ENCODE measurements at regions of chr20 and their contacts with region 1.

Region 1: GRCh38 chr20:35954200-35954906 is at the start of gene SCAND1:
- DNase-seq: peak; percentile 94 to 99 (median 96)
- ATAC-seq: peak; percentile 82
- H3K4me3 ChIP-seq: peak within 1 kb of the TSS; percentile 96
- H3K4me3 Mint-ChIP-seq: peak within 1 kb of the TSS; percentile 99
- H3K27ac ChIP-seq: peak within 1 kb of the TSS; percentile 99
- H3K27ac Mint-ChIP-seq: peak within 1 kb of the TSS; percentile 98
- H3K4me1 ChIP-seq: peaks cover 31% of the 10 kb centered on the region
- H3K4me1 Mint-ChIP-seq: peaks cover 30% of the 10 kb centered on the region
- H3K27me3 ChIP-seq: no peaks in the 10 kb centered on the region
- H3K27me3 Mint-ChIP-seq: no peaks in the 10 kb centered on the region
- CTCF ChIP-seq: peak; percentile 100
- total RNA-seq, gene SCAND1: 77.2 to 82.7 TPM

Region 2: DNA sequence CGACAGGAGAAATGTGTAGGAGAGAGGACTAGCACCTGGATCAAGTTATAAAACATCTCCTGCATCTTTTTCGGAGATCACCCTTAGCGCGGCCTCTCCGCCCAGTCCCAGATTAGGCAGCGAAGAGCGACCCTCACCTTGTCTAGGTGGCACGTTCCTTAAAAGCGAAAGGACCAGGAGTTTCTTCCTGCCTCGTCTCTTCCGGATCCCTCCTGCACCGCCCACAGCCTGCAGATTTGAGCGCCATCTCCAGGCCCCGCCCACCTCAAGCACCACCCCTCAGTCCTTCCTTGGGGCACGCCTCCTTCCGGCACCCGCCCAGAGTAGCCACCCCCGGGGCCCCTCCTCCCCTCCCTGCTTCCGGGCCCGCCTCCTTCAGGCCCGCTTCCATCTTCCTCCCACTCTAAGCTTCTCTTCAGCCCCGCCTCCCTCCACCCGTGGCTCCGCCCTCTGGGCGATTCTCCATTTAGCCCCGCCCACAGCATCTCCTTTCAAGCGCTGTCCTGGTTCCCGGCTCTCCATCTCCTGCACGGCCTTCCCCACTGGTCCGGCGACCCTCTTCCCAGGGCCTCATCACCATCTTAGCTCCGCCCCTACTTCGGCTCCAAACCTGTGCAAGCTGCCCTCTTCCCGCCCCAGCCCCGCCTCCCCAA is 1961.3 kb before region 1 on chr20:
- CTCF ChIA-PET with region 1: no interaction called
- POLR2A ChIA-PET with region 1: interaction called, 5 read pairs
- intact Hi-C with region 1: loop called in 1 of 2 experiments (anchors 10 kb)
- DNase-seq: peak; percentile 99 to 100 (median 99)
- ATAC-seq: peak; percentile 82
- H3K4me3 ChIP-seq: peak overlapping the region; percentile 97
- H3K4me3 Mint-ChIP-seq: peak overlapping the region; percentile 100
- H3K27ac ChIP-seq: peak overlapping the region; percentile 91 to 92
- H3K27ac Mint-ChIP-seq: peak overlapping the region; percentile 99
- H3K4me1 ChIP-seq: peaks cover 51% of the 10 kb centered on the region
- H3K4me1 Mint-ChIP-seq: peaks cover 68% of the 10 kb centered on the region
- H3K27me3 ChIP-seq: no peaks in the 10 kb centered on the region
- H3K27me3 Mint-ChIP-seq: no peaks in the 10 kb centered on the region
- CTCF ChIP-seq: no peak

Region 3: GRCh38 chr20:35284267-35284991 is 669.9 kb before region 1 on chr20 and contains the start of gene EIF6:
- CTCF ChIA-PET with region 1: interaction called, 3 read pairs
- POLR2A ChIA-PET with region 1: interaction called, 6 read pairs
- intact Hi-C with region 1: loop called in 1 of 2 experiments (anchors 5 kb)
- DNase-seq: peak; percentile 32 to 83 (median 64)
- ATAC-seq: peak; percentile 69
- H3K4me3 ChIP-seq: peak within 1 kb of the TSS; percentile 88
- H3K4me3 Mint-ChIP-seq: peak within 1 kb of the TSS; percentile 97
- H3K27ac ChIP-seq: peak within 1 kb of the TSS; percentile 61 to 71
- H3K27ac Mint-ChIP-seq: peak within 1 kb of the TSS; percentile 84
- H3K4me1 ChIP-seq: peaks cover 22% of the 10 kb centered on the region
- H3K4me1 Mint-ChIP-seq: peaks cover 22% of the 10 kb centered on the region
- H3K27me3 ChIP-seq: no peaks in the 10 kb centered on the region
- H3K27me3 Mint-ChIP-seq: no peaks in the 10 kb centered on the region
- CTCF ChIP-seq: no peak
- total RNA-seq, gene EIF6: 24.9 to 25.8 TPM

Region 4: GRCh38 chr20:35541783-35542588 is 412.4 kb before region 1 on chr20 and contains the start of gene ERGIC3:
- CTCF ChIA-PET with region 1: no interaction called
- POLR2A ChIA-PET with region 1: interaction called, 10 read pairs
- intact Hi-C with region 1: no loop called
- DNase-seq: peak; percentile 95 to 99 (median 96)
- ATAC-seq: peak; percentile 99
- H3K4me3 ChIP-seq: peak within 1 kb of the TSS; percentile 75
- H3K4me3 Mint-ChIP-seq: peak within 1 kb of the TSS; percentile 97
- H3K27ac ChIP-seq: peak within 1 kb of the TSS; percentile 65 to 81
- H3K27ac Mint-ChIP-seq: peak within 1 kb of the TSS; percentile 89
- H3K4me1 ChIP-seq: peaks cover 18% of the 10 kb centered on the region
- H3K4me1 Mint-ChIP-seq: peaks cover 32% of the 10 kb centered on the region
- H3K27me3 ChIP-seq: no peaks in the 10 kb centered on the region
- H3K27me3 Mint-ChIP-seq: no peaks in the 10 kb centered on the region
- CTCF ChIP-seq: no peak
- total RNA-seq, gene ERGIC3: 144 to 146 TPM

Region 5: GRCh38 chr20:35741892-35742740 is 212.2 kb before region 1 on chr20 and contains the start of gene RBM39:
- CTCF ChIA-PET with region 1: interaction called, 21 read pairs
- POLR2A ChIA-PET with region 1: interaction called, 126 read pairs
- intact Hi-C with region 1: loop called in 1 of 2 experiments (anchors 2 kb)
- DNase-seq: peak; percentile 96 to 100 (median 99)
- ATAC-seq: peak; percentile 80
- H3K4me3 ChIP-seq: peak within 1 kb of the TSS; percentile 84
- H3K4me3 Mint-ChIP-seq: peak within 1 kb of the TSS; percentile 99
- H3K27ac ChIP-seq: peak within 1 kb of the TSS; percentile 99 to 100
- H3K27ac Mint-ChIP-seq: peak within 1 kb of the TSS; percentile 99
- H3K4me1 ChIP-seq: peaks cover 44% of the 10 kb centered on the region
- H3K4me1 Mint-ChIP-seq: peaks cover 56% of the 10 kb centered on the region
- H3K27me3 ChIP-seq: no peaks in the 10 kb centered on the region
- H3K27me3 Mint-ChIP-seq: no peaks in the 10 kb centered on the region
- CTCF ChIP-seq: peak; percentile 57
- total RNA-seq, gene RBM39: 1,057 to 1,091 TPM

Region 6: DNA sequence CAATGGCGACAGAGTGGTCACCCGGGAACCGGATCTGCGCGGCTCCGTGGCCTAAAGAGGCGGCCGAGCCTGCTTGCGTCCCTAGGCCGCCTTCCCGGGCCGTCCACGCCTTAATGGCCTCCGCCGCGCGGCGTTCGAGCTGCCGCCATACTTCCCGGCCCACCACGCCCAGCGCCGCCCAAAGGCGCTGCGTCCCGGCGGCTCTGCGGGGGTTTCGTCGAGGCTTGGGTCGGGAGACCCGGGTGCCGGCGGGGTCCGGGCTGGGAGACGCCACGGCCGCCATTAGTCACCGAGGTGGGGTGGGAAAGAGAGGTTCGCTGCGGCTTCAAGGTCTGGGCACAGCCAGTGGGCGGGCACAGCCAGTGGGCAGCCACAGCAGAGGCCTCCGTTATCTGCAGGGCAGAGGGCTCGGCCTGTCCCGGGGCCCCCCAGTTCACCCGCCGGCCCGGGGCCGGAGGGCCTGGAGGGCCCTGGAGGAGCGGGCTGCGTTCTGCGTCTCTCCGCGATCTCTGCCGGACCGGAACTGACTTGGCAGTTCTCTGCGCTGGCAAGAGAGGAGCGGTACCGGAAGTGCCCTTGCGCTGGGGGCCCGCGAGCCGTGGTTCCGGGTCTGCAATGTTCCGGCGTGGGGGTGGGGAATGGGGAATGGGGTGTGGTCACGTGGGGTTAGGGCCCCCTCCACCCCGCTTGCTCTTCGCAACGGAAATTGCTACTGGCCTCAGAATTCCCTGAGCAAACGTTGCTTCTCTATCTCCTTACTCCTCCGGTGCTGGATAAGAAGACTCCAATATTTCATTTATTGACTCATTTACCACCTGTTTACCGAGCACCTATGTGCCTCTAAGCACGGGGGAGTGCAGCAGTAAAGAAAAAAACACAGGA is 96.3 kb after region 1 on chr20:
- CTCF ChIA-PET with region 1: interaction called, 3 read pairs
- POLR2A ChIA-PET with region 1: interaction called, 28 read pairs
- intact Hi-C with region 1: no loop called
- DNase-seq: peak; percentile 77 to 94 (median 90)
- ATAC-seq: peak; percentile 95
- H3K4me3 ChIP-seq: peak overlapping the region; percentile 87
- H3K4me3 Mint-ChIP-seq: peak overlapping the region; percentile 98
- H3K27ac ChIP-seq: peak overlapping the region; percentile 83 to 88
- H3K27ac Mint-ChIP-seq: peak overlapping the region; percentile 94
- H3K4me1 ChIP-seq: peaks cover 7% of the 10 kb centered on the region
- H3K4me1 Mint-ChIP-seq: peaks cover 55% of the 10 kb centered on the region
- H3K27me3 ChIP-seq: no peaks in the 10 kb centered on the region
- H3K27me3 Mint-ChIP-seq: no peaks in the 10 kb centered on the region
- CTCF ChIP-seq: no peak

Measured in CD4-positive, alpha-beta T cell (primary cell).